Ovary (tissue), 10 donors: ENCODE measurements at regions of chr4 and their contacts with region 1.

Region 1: GRCh38 chr4:140252742-140253555 is 99.0 kb upstream of the MAML3 start:
- DNase-seq: peak; percentile 78 to 89 (median 85)
- H3K4me3 ChIP-seq: peak overlapping the region; percentile 60
- H3K27ac ChIP-seq: peak overlapping the region; percentile 94 to 95
- H3K4me1 ChIP-seq: peaks cover 5% of the 10 kb centered on the region
- H3K27me3 ChIP-seq: no peaks in the 10 kb centered on the region
- CTCF ChIP-seq: peak; percentile 78 to 85 (median 84)
- EP300 ChIP-seq: no peak
- POLR2A ChIP-seq: no peak

Region 2: GRCh38 chr4:139651282-139652194 is 601.4 kb before region 1 on chr4:
- intact Hi-C with region 1: loop called in 3 of 4 experiments (anchors 10 kb)
- DNase-seq: peak; percentile 92 to 94 (median 94)
- H3K4me3 ChIP-seq: no peak overlapping the region
- H3K27ac ChIP-seq: no peak overlapping the region
- H3K4me1 ChIP-seq: peaks cover 3% of the 10 kb centered on the region
- H3K27me3 ChIP-seq: no peaks in the 10 kb centered on the region
- CTCF ChIP-seq: peak; percentile 71 to 89 (median 84)
- EP300 ChIP-seq: no peak
- POLR2A ChIP-seq: no peak

Region 3: GRCh38 chr4:139734875-139735380 is 518.0 kb before region 1 on chr4:
- intact Hi-C with region 1: loop called (anchors 2 to 5 kb)
- DNase-seq: peak; percentile 93 to 95 (median 95)
- H3K4me3 ChIP-seq: peak overlapping the region; percentile 37
- H3K27ac ChIP-seq: peak overlapping the region; percentile 80 to 83
- H3K4me1 ChIP-seq: peaks cover 10% of the 10 kb centered on the region
- H3K27me3 ChIP-seq: no peaks in the 10 kb centered on the region
- CTCF ChIP-seq: peak; percentile 81 to 89 (median 86)
- EP300 ChIP-seq: no peak
- POLR2A ChIP-seq: peak; percentile 51

Region 4: GRCh38 chr4:140012688-140013486 is 240.1 kb before region 1 on chr4:
- intact Hi-C with region 1: loop called in 1 of 4 experiments (anchors 10 kb)
- DNase-seq: peak in 1 of 5 donors; percentile 36
- H3K4me3 ChIP-seq: no peak overlapping the region
- H3K27ac ChIP-seq: no peak overlapping the region
- H3K4me1 ChIP-seq: peaks cover 4% of the 10 kb centered on the region
- H3K27me3 ChIP-seq: no peaks in the 10 kb centered on the region
- CTCF ChIP-seq: no peak
- EP300 ChIP-seq: no peak
- POLR2A ChIP-seq: no peak

Region 5: GRCh38 chr4:140059159-140059558 is 193.8 kb before region 1 on chr4:
- intact Hi-C with region 1: loop called in 2 of 4 experiments (anchors 5 kb)
- DNase-seq: no peak
- H3K4me3 ChIP-seq: no peak overlapping the region
- H3K27ac ChIP-seq: no peak overlapping the region
- H3K4me1 ChIP-seq: no peaks in the 10 kb centered on the region
- H3K27me3 ChIP-seq: no peaks in the 10 kb centered on the region
- CTCF ChIP-seq: no peak
- EP300 ChIP-seq: no peak
- POLR2A ChIP-seq: no peak

Region 6: DNA sequence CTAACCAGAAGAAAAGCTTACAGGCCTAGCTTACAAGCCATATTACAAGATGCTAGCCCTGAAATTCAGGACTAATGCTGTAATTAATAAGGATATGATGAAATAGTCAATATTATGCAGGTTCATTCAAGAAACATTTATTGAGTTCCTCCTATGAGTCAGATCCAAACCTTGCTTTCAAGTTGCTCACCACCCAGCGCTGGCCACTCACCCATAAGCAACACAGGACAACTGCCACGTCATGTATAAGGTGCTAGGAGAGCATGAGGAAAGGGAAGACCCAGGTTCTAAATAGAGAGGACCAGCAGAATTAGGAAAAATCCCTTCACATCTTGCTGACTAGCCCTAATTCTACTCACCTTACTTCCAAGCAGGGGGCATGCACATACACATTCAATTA is 122.3 kb before region 1 on chr4:
- intact Hi-C with region 1: no loop called
- DNase-seq: no peak
- H3K4me3 ChIP-seq: no peak overlapping the region
- H3K27ac ChIP-seq: no peak overlapping the region
- H3K4me1 ChIP-seq: peaks cover 18% of the 10 kb centered on the region
- H3K27me3 ChIP-seq: no peaks in the 10 kb centered on the region
- CTCF ChIP-seq: no peak
- EP300 ChIP-seq: no peak
- POLR2A ChIP-seq: no peak